B cell (primary cell): ENCODE measurements at regions of chr9 and their contacts with region 1.

Region 1: GRCh38 chr9:127199001-127199791 is 65.4 kb upstream of the GARNL3 start:
- DNase-seq: peak; percentile 85
- ATAC-seq: peak; percentile 89
- H3K4me3 ChIP-seq: no peak overlapping the region
- H3K4me3 Mint-ChIP-seq: no peak overlapping the region
- H3K27ac ChIP-seq: no peak overlapping the region
- H3K27ac Mint-ChIP-seq: no peak overlapping the region
- H3K4me1 ChIP-seq: peaks cover 0 to 6% of the 10 kb centered on the region in 2 donors
- H3K4me1 Mint-ChIP-seq: peaks cover 2% of the 10 kb centered on the region
- H3K27me3 ChIP-seq: no peaks in the 10 kb centered on the region
- H3K27me3 Mint-ChIP-seq: no peaks in the 10 kb centered on the region
- CTCF ChIP-seq: peak; percentile 91

Region 2: GRCh38 chr9:126939821-126940221 is 259.4 kb before region 1 on chr9:
- CTCF ChIA-PET with region 1: interaction called, 217 read pairs
- POLR2A ChIA-PET with region 1: interaction called, 3 read pairs
- intact Hi-C with region 1: no loop called
- DNase-seq: no peak
- ATAC-seq: no peak
- H3K4me3 ChIP-seq: no peak overlapping the region
- H3K4me3 Mint-ChIP-seq: no peak overlapping the region
- H3K27ac ChIP-seq: no peak overlapping the region
- H3K27ac Mint-ChIP-seq: no peak overlapping the region
- H3K4me1 ChIP-seq: no peaks in the 10 kb centered on the region
- H3K4me1 Mint-ChIP-seq: peaks cover 5% of the 10 kb centered on the region
- H3K27me3 ChIP-seq: no peaks in the 10 kb centered on the region
- H3K27me3 Mint-ChIP-seq: no peaks in the 10 kb centered on the region
- CTCF ChIP-seq: no peak

Region 3: GRCh38 chr9:126965541-126966428 is 233.4 kb before region 1 on chr9:
- CTCF ChIA-PET with region 1: interaction called, 20 read pairs
- POLR2A ChIA-PET with region 1: no interaction called
- intact Hi-C with region 1: no loop called
- DNase-seq: no peak
- ATAC-seq: peak; percentile 36
- H3K4me3 ChIP-seq: no peak overlapping the region
- H3K4me3 Mint-ChIP-seq: no peak overlapping the region
- H3K27ac ChIP-seq: no peak overlapping the region
- H3K27ac Mint-ChIP-seq: no peak overlapping the region
- H3K4me1 ChIP-seq: no peaks in the 10 kb centered on the region
- H3K4me1 Mint-ChIP-seq: no peaks in the 10 kb centered on the region
- H3K27me3 ChIP-seq: no peaks in the 10 kb centered on the region
- H3K27me3 Mint-ChIP-seq: no peaks in the 10 kb centered on the region
- CTCF ChIP-seq: peak; percentile 39

Region 4: GRCh38 chr9:127138444-127138843 is 60.8 kb before region 1 on chr9:
- CTCF ChIA-PET with region 1: no interaction called
- POLR2A ChIA-PET with region 1: no interaction called
- intact Hi-C with region 1: no loop called
- DNase-seq: no peak
- ATAC-seq: no peak
- H3K4me3 ChIP-seq: no peak overlapping the region
- H3K4me3 Mint-ChIP-seq: no peak overlapping the region
- H3K27ac ChIP-seq: no peak overlapping the region
- H3K27ac Mint-ChIP-seq: no peak overlapping the region
- H3K4me1 ChIP-seq: no peaks in the 10 kb centered on the region
- H3K4me1 Mint-ChIP-seq: no peaks in the 10 kb centered on the region
- H3K27me3 ChIP-seq: no peaks in the 10 kb centered on the region
- H3K27me3 Mint-ChIP-seq: no peaks in the 10 kb centered on the region
- CTCF ChIP-seq: no peak

Region 5: DNA sequence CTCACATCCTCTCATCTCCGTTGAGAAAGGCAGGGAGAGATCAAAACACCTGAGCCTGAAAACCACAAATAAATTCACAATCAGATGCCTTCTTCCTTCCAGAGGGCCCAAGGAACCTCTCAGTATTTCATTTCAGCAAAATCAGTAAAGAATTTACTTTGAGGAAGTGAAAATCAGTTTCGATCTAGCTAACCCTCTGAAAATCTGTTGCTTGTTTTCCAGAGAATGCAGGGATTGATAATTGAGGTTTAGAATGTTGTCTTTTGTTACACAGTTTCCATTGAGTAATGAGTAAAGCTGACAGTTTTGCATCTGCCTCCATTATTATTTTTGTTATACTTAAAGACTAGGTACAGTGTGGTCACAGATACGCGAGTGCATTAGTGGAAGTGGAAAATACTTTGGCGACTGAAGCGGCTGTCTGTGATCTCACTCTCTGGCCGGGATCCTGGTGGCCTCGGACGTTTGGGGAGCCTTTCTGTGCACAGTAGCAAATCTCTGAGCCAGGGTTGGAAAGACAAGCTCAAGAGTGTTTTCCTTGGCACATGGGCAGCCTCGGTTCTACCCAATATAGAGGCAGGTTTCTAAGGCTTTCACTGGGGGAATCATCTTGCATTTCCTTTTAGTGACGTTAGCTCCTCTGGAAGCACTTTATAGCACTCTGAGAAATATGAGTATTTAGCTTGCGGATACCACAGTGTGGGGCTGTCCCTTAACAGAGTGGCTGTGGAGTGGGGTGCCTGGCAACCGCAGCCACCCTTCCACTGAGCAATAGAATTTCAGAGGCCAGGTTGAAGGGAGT is 44.6 kb before region 1 on chr9:
- CTCF ChIA-PET with region 1: interaction called, 4 read pairs
- POLR2A ChIA-PET with region 1: no interaction called
- intact Hi-C with region 1: loop called (anchors 5 kb)
- DNase-seq: peak; percentile 40
- ATAC-seq: peak; percentile 47
- H3K4me3 ChIP-seq: peak overlapping the region in 1 of 5 experiments; percentile 11
- H3K4me3 Mint-ChIP-seq: peak overlapping the region; percentile 73
- H3K27ac ChIP-seq: peak overlapping the region in 1 of 2 donors; percentile 5
- H3K27ac Mint-ChIP-seq: peak overlapping the region; percentile 83
- H3K4me1 ChIP-seq: peaks cover 17 to 20% of the 10 kb centered on the region in 2 donors
- H3K4me1 Mint-ChIP-seq: peaks cover 26% of the 10 kb centered on the region
- H3K27me3 ChIP-seq: no peaks in the 10 kb centered on the region
- H3K27me3 Mint-ChIP-seq: no peaks in the 10 kb centered on the region
- CTCF ChIP-seq: no peak

Region 6: DNA sequence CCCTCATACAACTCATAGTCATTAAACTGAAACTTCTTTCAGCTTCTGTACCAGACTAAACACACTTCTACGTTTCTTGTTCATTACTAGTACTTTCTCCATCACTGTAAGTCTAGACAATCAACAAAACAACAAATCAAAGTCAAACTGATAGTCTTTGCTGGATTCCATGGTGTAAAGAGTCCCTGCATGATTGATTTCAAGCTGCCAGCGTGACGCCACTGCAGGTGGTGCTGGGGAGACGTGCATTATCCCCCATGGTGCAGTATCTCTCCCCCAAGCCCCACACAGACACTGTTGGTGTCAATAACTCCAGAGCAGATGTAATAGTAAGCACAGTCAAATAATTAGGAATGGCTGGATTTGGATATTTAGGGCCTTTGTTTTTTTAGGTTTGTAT is 187.1 kb after region 1 on chr9:
- CTCF ChIA-PET with region 1: no interaction called
- POLR2A ChIA-PET with region 1: interaction called, 13 read pairs
- intact Hi-C with region 1: no loop called
- DNase-seq: no peak
- ATAC-seq: no peak
- H3K4me3 ChIP-seq: no peak overlapping the region
- H3K4me3 Mint-ChIP-seq: no peak overlapping the region
- H3K27ac ChIP-seq: no peak overlapping the region
- H3K27ac Mint-ChIP-seq: no peak overlapping the region
- H3K4me1 ChIP-seq: peaks cover 0 to 2% of the 10 kb centered on the region in 2 donors
- H3K4me1 Mint-ChIP-seq: peaks cover 4% of the 10 kb centered on the region
- H3K27me3 ChIP-seq: peaks cover 0 to 31% (median 5%) of the 10 kb centered on the region in 4 experiments
- H3K27me3 Mint-ChIP-seq: peaks cover 27% of the 10 kb centered on the region
- CTCF ChIP-seq: no peak

Region 7: GRCh38 chr9:127611899-127612790 is 412.9 kb after region 1 on chr9 and contains the start of gene STXBP1:
- CTCF ChIA-PET with region 1: no interaction called
- POLR2A ChIA-PET with region 1: no interaction called
- intact Hi-C with region 1: no loop called
- DNase-seq: peak; percentile 91
- ATAC-seq: peak; percentile 94
- H3K4me3 ChIP-seq: peak within 1 kb of the TSS; percentile 55 to 84 (median 60)
- H3K4me3 Mint-ChIP-seq: peak within 1 kb of the TSS; percentile 98
- H3K27ac ChIP-seq: no peak within 1 kb of the TSS
- H3K27ac Mint-ChIP-seq: peak within 1 kb of the TSS; percentile 80
- H3K4me1 ChIP-seq: peaks cover 28 to 31% of the 10 kb centered on the region in 2 donors
- H3K4me1 Mint-ChIP-seq: peaks cover 25% of the 10 kb centered on the region
- H3K27me3 ChIP-seq: peaks cover 0 to 39% (median 33%) of the 10 kb centered on the region in 4 experiments
- H3K27me3 Mint-ChIP-seq: peaks cover 44% of the 10 kb centered on the region
- CTCF ChIP-seq: no peak
- total RNA-seq, gene STXBP1: 0.62 and 0.78 TPM in 2 replicates